Activated naive CD4-positive, alpha-beta T cell treated with anti-CD3 and anti-CD28 coated beads for 36 hours (primary cell): ENCODE measurements at regions of chr14 and their contacts with region 1.

Region 1: GRCh38 chr14:22986508-22987054 is 4.2 kb upstream of the AJUBA start:
- DNase-seq: peak; percentile 97
- H3K4me3 Mint-ChIP-seq: no peak overlapping the region
- H3K27ac Mint-ChIP-seq: no peak overlapping the region
- H3K4me1 Mint-ChIP-seq: no peaks in the 10 kb centered on the region
- H3K27me3 Mint-ChIP-seq: no peaks in the 10 kb centered on the region

Region 2: DNA sequence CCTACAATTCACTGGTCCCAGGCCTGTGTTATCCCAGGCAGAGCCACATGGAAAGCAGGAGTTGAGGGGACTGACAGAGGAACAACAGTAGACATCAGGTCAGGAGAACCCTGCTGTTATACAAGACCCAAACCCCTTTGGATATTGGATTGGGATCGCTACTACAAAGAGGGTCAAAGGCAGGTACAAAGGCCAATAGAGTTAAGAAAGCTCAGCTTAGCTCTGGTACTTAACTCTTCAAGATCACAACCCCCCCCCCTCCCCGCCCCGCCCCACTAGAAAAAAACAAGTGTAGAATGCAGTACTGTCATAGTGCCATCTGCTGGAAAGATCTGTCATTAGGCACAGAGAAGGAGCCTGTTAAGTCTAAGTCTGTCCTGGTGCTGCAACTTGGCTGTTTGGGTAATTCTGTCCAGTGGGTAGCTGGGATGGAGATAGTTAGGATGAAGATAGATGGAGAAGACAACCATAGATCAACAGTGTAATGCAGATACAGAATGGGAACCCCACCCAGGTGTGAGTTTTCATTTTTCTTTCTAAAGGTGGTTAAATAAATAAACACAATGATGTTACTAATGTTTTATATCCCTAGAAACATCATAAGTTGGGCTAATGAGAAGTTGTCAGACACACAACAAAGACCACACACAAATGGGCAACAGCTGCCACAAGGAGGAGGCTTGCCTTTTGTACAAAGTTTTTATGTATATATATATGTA is 86.3 kb before region 1 on chr14:
- CTCF ChIA-PET with region 1: interaction called, 12 read pairs
- intact Hi-C with region 1: no loop called
- DNase-seq: peak; percentile 64
- H3K4me3 Mint-ChIP-seq: no peak overlapping the region
- H3K27ac Mint-ChIP-seq: no peak overlapping the region
- H3K4me1 Mint-ChIP-seq: peaks cover 12% of the 10 kb centered on the region
- H3K27me3 Mint-ChIP-seq: no peaks in the 10 kb centered on the region

Region 3: GRCh38 chr14:22955702-22956569 is 30.6 kb before region 1 on chr14:
- CTCF ChIA-PET with region 1: interaction called, 29 read pairs
- intact Hi-C with region 1: loop called (anchors 1 kb)
- DNase-seq: no peak
- H3K4me3 Mint-ChIP-seq: peak overlapping the region; percentile 89
- H3K27ac Mint-ChIP-seq: peak overlapping the region; percentile 84
- H3K4me1 Mint-ChIP-seq: peaks cover 22% of the 10 kb centered on the region
- H3K27me3 Mint-ChIP-seq: no peaks in the 10 kb centered on the region

Region 4: DNA sequence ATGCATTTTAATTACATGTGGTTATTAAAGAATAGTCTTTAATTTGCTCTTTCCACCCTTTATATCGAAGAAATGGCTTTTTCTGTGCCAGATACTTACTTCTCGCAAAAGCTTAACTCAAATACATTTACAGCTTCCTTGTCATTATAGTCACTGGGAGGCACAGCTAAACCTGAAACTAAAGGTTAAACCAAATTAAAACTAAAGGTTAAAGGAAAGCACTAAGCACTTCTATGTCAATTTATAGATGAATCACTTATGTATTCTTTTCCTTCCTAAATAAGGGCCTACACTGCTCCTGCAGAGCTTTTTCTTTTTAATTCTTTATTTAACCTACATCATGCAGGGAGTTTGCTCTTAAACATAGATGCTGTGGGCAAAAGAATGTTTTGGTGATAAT is 14.3 kb after region 1 on chr14:
- CTCF ChIA-PET with region 1: interaction called, 79 read pairs
- intact Hi-C with region 1: no loop called
- DNase-seq: no peak
- H3K4me3 Mint-ChIP-seq: no peak overlapping the region
- H3K27ac Mint-ChIP-seq: no peak overlapping the region
- H3K4me1 Mint-ChIP-seq: peaks cover 7% of the 10 kb centered on the region
- H3K27me3 Mint-ChIP-seq: no peaks in the 10 kb centered on the region

Region 5: DNA sequence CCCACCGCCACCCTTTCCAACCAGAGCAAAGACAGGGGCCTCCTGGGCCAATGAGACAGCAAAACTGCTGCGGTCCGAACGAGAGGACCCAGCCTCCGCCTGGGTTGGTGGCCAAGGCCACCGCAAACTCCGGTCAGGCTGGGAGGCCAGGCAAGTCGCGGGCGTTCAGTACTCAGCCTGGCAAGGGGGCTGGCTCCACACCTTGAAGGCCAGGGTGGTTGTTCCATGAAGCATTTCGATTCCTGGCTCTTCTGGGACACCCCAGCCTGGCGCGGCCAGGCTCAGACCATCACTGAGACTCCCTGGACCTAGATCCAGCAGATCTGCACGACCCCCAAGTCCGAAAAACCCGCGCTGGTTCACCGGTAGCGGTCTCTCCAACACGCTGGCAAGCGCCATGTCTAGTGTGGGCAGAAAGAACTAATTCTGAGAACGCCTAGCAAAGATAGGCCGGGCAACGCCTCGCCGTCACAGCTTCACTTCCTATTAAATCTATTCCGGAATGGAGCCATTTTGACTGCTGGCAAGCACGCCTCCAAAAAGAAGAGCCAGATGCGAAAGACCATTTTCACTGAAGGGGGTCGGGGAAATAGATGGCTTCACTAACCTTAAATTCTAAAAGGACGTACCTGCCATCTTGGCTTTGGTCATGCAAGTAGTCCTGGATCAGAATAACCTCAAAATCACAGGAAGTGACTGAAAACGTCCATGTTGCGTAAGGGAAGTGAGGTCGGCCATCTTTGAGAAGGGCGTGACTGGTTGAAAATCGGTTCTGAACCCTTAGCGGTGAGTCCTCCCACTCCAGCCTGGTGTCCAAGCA is 48.1 kb after region 1 on chr14 and contains the start of gene PSMB5:
- CTCF ChIA-PET with region 1: interaction called, 20 read pairs
- intact Hi-C with region 1: no loop called
- DNase-seq: peak; percentile 96
- H3K4me3 Mint-ChIP-seq: peak within 1 kb of the TSS; percentile 88
- H3K27ac Mint-ChIP-seq: peak within 1 kb of the TSS; percentile 96
- H3K4me1 Mint-ChIP-seq: peaks cover 34% of the 10 kb centered on the region
- H3K27me3 Mint-ChIP-seq: no peaks in the 10 kb centered on the region
- total RNA-seq, gene PSMB5: 120 to 125 TPM

Region 6: DNA sequence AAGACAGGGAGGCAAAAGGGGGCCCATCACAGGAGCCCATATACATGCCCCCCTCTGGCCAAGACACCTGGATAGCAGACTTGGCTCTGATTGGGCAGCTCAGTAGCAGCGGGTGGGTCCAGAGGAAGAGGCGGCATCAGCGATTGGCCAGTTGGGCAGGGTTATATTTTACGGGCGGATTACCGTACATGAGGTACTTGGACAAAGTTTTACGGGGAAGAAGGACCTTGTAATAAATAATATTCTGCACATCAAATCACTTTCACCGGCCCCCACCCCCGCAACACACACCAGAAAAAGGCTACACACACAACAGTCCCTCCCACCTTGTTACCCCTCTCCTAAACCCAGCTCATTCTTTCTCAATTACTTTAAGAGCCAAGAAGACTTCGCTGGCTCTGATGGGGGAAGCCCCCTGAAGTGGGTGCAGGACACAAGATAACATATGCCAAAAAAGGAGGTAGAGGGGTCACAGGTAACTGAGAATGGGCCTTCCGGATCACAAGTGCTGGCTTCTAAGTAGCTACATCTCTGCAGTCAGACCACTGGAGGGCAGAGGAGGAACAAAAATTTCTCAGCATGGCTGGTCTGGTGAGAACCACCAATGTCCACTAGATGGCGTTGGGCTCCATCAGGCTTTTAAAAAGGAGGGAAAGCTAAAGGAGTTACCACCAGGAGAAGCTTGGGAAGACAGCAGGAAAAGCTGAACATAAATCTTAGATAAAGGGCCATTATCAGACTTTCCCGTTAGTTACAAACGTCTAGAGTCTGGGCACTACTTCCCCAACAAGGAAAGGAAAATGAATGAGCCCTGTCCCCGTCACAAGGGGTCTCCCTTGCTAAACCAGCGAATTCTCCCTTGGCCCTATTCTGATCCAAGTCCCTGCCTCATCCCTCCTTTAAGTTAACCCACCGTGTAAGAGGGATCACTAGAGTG is 82.2 kb after region 1 on chr14:
- CTCF ChIA-PET with region 1: interaction called, 713 read pairs
- intact Hi-C with region 1: no loop called
- DNase-seq: peak; percentile 88
- H3K4me3 Mint-ChIP-seq: peak overlapping the region; percentile 15
- H3K27ac Mint-ChIP-seq: peak overlapping the region; percentile 30
- H3K4me1 Mint-ChIP-seq: peaks cover 41% of the 10 kb centered on the region
- H3K27me3 Mint-ChIP-seq: no peaks in the 10 kb centered on the region

Region 7: GRCh38 chr14:23301288-23301968 is 314.8 kb after region 1 on chr14:
- CTCF ChIA-PET with region 1: no interaction called
- intact Hi-C with region 1: loop called (anchors 1 kb)
- DNase-seq: peak; percentile 96
- H3K4me3 Mint-ChIP-seq: peak overlapping the region; percentile 90
- H3K27ac Mint-ChIP-seq: peak overlapping the region; percentile 92
- H3K4me1 Mint-ChIP-seq: peaks cover 12% of the 10 kb centered on the region
- H3K27me3 Mint-ChIP-seq: peaks cover 13% of the 10 kb centered on the region